CD4-positive, alpha-beta T cell (primary cell): ENCODE measurements at regions of chr18 and their contacts with region 1.

Region 1: DNA sequence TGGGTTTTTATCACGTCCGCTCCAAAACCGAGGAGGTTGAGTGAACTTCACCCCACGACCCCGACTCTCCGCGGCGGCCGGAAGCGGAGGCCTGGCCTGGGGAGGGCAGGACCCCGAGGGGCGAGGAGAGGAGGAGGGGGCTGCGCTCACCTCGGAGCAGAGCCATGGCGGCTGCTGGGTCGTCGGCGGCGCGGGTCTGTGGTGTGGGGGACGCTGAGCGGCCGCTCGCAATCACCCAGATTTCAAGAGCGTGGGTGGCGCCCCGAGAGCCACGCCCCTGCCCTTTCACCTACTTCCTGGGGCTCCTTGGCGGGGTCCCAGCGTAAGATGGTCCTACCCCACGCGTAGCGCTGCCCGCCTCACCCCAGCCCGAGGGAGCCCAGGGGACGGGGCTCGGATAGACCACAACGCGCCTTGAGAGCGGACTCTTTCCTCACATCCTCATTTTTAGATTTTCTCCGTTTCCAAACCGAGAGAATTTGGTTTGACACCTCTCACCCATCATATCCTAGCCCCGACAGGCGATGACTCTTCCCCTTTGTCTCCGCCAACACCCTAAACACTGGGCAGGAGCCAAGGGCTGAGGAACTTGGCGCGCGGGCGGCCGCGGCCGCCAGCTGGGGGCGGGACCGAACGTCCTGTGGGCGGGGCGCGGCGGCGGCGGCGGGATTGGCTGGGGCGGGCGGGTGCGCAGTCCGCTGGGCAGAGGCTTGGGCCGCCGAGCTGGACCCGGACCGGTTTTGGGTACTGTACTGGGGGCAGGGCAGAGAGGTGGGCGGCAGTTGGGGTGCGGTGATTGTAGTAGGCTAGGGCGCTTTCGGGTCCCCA is at the start of gene ACAA2:
- DNase-seq: peak; percentile 53 to 89 (median 72)
- ATAC-seq: peak; percentile 80
- H3K4me3 ChIP-seq: peak within 1 kb of the TSS; percentile 96
- H3K4me3 Mint-ChIP-seq: peak within 1 kb of the TSS; percentile 100
- H3K27ac ChIP-seq: peak within 1 kb of the TSS; percentile 90 to 96
- H3K27ac Mint-ChIP-seq: peak within 1 kb of the TSS; percentile 87
- H3K4me1 ChIP-seq: peaks cover 35% of the 10 kb centered on the region
- H3K4me1 Mint-ChIP-seq: peaks cover 63% of the 10 kb centered on the region
- H3K27me3 ChIP-seq: no peaks in the 10 kb centered on the region
- H3K27me3 Mint-ChIP-seq: no peaks in the 10 kb centered on the region
- CTCF ChIP-seq: no peak
- total RNA-seq, gene ACAA2: 5.7 to 6.2 TPM

Region 2: DNA sequence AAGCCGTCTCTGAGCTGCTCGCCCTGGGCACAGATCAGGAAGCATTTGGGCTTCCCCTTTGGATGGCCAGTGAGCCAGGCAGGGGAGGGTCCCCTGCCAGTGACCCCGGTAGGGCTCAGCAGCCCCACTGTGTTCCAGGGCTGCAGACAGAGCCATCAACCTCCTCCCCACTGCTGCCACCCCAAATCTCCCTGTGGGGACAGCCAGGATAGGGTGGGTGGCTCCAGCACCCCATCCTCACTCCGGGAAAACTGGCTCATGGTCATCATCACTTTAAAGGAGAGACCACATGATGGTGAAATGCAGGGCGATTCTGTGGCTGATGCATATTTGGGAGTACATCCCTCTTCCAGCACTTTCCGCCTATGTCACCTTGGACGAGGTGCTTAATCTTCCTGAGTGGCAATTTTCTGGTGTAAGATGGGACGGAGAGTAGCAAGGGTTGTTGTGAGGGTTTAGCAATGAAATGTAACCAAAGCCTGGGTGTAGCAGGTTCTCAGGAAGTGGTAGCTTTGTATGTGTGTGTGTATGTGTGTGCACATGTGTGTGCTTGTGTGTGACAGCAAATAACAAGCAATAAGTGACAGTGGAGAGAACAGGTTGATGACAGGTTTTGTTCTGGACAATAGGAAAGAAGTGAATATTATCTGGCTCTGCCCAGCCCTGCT is 62.0 kb before region 1 on chr18:
- CTCF ChIA-PET with region 1: no interaction called
- POLR2A ChIA-PET with region 1: no interaction called
- intact Hi-C with region 1: loop called in 1 of 2 experiments (anchors 5 kb)
- DNase-seq: peak in 4 of 14 experiments; percentile 16 to 85 (median 76)
- ATAC-seq: peak; percentile 95
- H3K4me3 ChIP-seq: peak overlapping the region; percentile 1
- H3K4me3 Mint-ChIP-seq: peak overlapping the region; percentile 65
- H3K27ac ChIP-seq: no peak overlapping the region
- H3K27ac Mint-ChIP-seq: peak overlapping the region; percentile 63
- H3K4me1 ChIP-seq: peaks cover 18% of the 10 kb centered on the region
- H3K4me1 Mint-ChIP-seq: peaks cover 39% of the 10 kb centered on the region
- H3K27me3 ChIP-seq: no peaks in the 10 kb centered on the region
- H3K27me3 Mint-ChIP-seq: no peaks in the 10 kb centered on the region
- CTCF ChIP-seq: no peak

Region 3: GRCh38 chr18:50287441-50288347 is 474.2 kb after region 1 on chr18 and contains the start of gene CXXC1:
- CTCF ChIA-PET with region 1: no interaction called
- POLR2A ChIA-PET with region 1: interaction called, 5 read pairs
- intact Hi-C with region 1: loop called in 1 of 2 experiments (anchors 10 kb)
- DNase-seq: peak; percentile 96 to 99 (median 97)
- ATAC-seq: peak; percentile 85
- H3K4me3 ChIP-seq: peak within 1 kb of the TSS; percentile 85
- H3K4me3 Mint-ChIP-seq: peak within 1 kb of the TSS; percentile 96
- H3K27ac ChIP-seq: peak within 1 kb of the TSS; percentile 72 to 93
- H3K27ac Mint-ChIP-seq: peak within 1 kb of the TSS; percentile 98
- H3K4me1 ChIP-seq: peaks cover 24% of the 10 kb centered on the region
- H3K4me1 Mint-ChIP-seq: peaks cover 27% of the 10 kb centered on the region
- H3K27me3 ChIP-seq: no peaks in the 10 kb centered on the region
- H3K27me3 Mint-ChIP-seq: no peaks in the 10 kb centered on the region
- CTCF ChIP-seq: peak; percentile 61
- total RNA-seq, gene CXXC1: 120 to 128 TPM